CD8-positive, alpha-beta T cell (primary cell): ENCODE measurements at regions of chr9 and their contacts with region 1.

Region 1: DNA sequence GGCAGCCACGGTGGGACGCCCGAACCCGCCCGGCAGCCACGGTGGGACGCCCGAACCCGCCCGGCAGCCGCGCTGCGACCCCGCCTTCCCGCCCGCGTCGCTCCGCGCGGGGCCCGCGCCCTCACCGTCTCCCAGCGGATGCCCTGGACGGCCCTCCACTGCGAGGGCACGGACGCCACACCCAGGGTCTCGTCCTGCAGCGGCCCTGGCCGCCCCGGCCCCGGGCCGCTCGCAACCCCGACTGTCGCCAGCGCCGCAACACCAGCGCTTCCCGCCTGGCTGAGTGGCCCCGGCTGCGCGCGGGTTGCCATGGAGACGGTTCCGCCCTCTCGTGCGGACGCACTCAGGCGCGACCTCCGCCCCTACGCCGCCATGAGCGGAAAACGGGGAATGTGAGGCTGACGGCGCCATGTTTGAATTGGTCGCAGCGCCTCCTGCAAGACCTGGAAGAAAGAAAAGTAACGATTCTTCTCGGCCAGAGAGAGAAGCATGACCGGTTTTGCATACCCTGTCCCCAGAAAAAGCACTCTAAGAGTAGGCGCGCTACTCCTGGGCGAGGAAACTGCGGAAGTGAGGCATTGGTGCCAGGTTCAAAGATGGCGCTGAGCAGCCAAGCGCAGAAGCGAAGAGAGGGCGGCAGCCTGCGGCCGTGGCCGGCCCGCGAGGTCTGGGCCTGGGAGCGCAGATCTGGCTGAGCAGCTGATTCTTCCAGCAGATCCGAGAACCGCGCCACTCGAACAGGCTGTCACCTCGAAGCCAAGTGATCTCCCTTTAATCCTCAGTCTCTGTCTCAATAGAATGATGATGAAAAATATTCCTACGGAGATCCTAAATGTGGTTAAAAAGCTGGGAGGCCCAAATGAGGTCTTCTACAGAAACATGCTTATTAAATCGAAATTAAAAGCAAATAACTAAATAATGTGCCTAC is at the start of gene DYNC2I2:
- DNase-seq: peak; percentile 92 to 98 (median 97)
- ATAC-seq: peak; percentile 96
- H3K4me3 ChIP-seq: peak within 1 kb of the TSS; percentile 72 to 76
- H3K4me3 Mint-ChIP-seq: peak within 1 kb of the TSS; percentile 95
- H3K27ac ChIP-seq: peak within 1 kb of the TSS; percentile 88 to 97
- H3K27ac Mint-ChIP-seq: peak within 1 kb of the TSS; percentile 99
- H3K4me1 ChIP-seq: peaks cover 5% of the 10 kb centered on the region
- H3K4me1 Mint-ChIP-seq: peaks cover 7% of the 10 kb centered on the region
- H3K27me3 ChIP-seq: no peaks in the 10 kb centered on the region
- H3K27me3 Mint-ChIP-seq: no peaks in the 10 kb centered on the region
- CTCF ChIP-seq: no peak
- total RNA-seq, gene DYNC2I2: 3.7 to 3.9 TPM

Region 2: GRCh38 chr9:128575469-128575868 is 81.2 kb before region 1 on chr9:
- CTCF ChIA-PET with region 1: no interaction called
- POLR2A ChIA-PET with region 1: no interaction called
- intact Hi-C with region 1: no loop called
- DNase-seq: no peak
- ATAC-seq: no peak
- H3K4me3 ChIP-seq: no peak overlapping the region
- H3K4me3 Mint-ChIP-seq: no peak overlapping the region
- H3K27ac ChIP-seq: no peak overlapping the region
- H3K27ac Mint-ChIP-seq: no peak overlapping the region
- H3K4me1 ChIP-seq: peaks cover 8% of the 10 kb centered on the region
- H3K4me1 Mint-ChIP-seq: peaks cover 13% of the 10 kb centered on the region
- H3K27me3 ChIP-seq: no peaks in the 10 kb centered on the region
- H3K27me3 Mint-ChIP-seq: no peaks in the 10 kb centered on the region
- CTCF ChIP-seq: no peak

Region 3: GRCh38 chr9:128688512-128689292 is 32.0 kb after region 1 on chr9 and contains the start of gene SET:
- CTCF ChIA-PET with region 1: interaction called, 3 read pairs
- POLR2A ChIA-PET with region 1: interaction called, 4 read pairs
- intact Hi-C with region 1: loop called (anchors 1 kb)
- DNase-seq: peak; percentile 81 to 97 (median 92)
- ATAC-seq: peak; percentile 78
- H3K4me3 ChIP-seq: peak within 1 kb of the TSS; percentile 68 to 90
- H3K4me3 Mint-ChIP-seq: peak within 1 kb of the TSS; percentile 90
- H3K27ac ChIP-seq: peak within 1 kb of the TSS; percentile 68 to 91
- H3K27ac Mint-ChIP-seq: peak within 1 kb of the TSS; percentile 96
- H3K4me1 ChIP-seq: peaks cover 64% of the 10 kb centered on the region
- H3K4me1 Mint-ChIP-seq: peaks cover 67% of the 10 kb centered on the region
- H3K27me3 ChIP-seq: no peaks in the 10 kb centered on the region
- H3K27me3 Mint-ChIP-seq: no peaks in the 10 kb centered on the region
- CTCF ChIP-seq: no peak
- total RNA-seq, gene SET: 243 to 260 TPM

Region 4: DNA sequence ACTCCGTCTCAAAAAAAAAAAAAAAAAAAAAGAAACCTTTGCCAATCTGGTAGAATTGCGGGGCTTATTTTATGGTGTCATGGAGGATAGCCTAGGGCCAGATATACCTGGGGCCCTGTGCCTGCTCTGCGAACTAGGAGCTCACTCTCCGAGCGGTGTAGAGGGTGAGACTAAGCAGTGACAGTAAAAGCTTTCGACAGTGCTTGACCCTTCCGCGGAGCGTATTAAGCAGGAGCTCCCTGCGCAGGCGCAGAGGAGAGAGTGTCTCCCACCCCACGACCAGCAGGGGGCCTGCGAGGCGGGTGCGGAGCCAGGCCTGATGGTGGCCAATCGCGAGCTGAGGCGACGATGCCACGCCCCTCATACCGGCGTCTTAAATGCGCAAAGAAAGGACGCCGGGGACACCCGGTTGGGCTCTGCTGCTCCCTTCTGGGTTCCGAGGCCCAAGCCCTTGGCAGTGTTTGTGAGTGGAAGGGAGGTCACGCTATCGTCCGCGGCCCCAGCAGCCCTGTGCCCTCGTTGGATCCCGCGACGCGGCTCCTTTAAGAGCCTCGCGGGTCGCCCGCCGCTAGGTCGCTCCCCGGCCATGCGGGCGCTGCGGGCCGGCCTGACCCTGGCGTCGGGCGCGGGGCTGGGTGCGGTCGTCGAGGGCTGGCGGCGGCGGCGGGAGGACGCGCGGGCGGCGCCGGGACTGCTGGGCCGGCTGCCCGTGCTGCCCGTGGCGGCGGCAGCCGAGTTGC is 161.6 kb after region 1 on chr9 and contains the start of gene ENDOG:
- CTCF ChIA-PET with region 1: no interaction called
- POLR2A ChIA-PET with region 1: interaction called, 3 read pairs
- intact Hi-C with region 1: loop called in 1 of 2 experiments (anchors 1 kb)
- DNase-seq: peak; percentile 94 to 98 (median 97)
- ATAC-seq: peak; percentile 96
- H3K4me3 ChIP-seq: peak within 1 kb of the TSS; percentile 59 to 75
- H3K4me3 Mint-ChIP-seq: peak within 1 kb of the TSS; percentile 91
- H3K27ac ChIP-seq: peak within 1 kb of the TSS; percentile 52 to 67
- H3K27ac Mint-ChIP-seq: peak within 1 kb of the TSS; percentile 87
- H3K4me1 ChIP-seq: peaks cover 12% of the 10 kb centered on the region
- H3K4me1 Mint-ChIP-seq: peaks cover 21% of the 10 kb centered on the region
- H3K27me3 ChIP-seq: no peaks in the 10 kb centered on the region
- H3K27me3 Mint-ChIP-seq: no peaks in the 10 kb centered on the region
- CTCF ChIP-seq: peak; percentile 98
- total RNA-seq, gene ENDOG: 6.2 to 6.4 TPM

Region 5: GRCh38 chr9:128829477-128830251 is 173.0 kb after region 1 on chr9 and contains the start of gene SPOUT1:
- CTCF ChIA-PET with region 1: no interaction called
- POLR2A ChIA-PET with region 1: no interaction called
- intact Hi-C with region 1: loop called in 1 of 2 experiments (anchors 1 kb)
- DNase-seq: peak; percentile 88 to 96 (median 92)
- ATAC-seq: peak; percentile 99
- H3K4me3 ChIP-seq: peak within 1 kb of the TSS; percentile 89 to 99
- H3K4me3 Mint-ChIP-seq: peak within 1 kb of the TSS; percentile 96
- H3K27ac ChIP-seq: peak within 1 kb of the TSS; percentile 73 to 83
- H3K27ac Mint-ChIP-seq: peak within 1 kb of the TSS; percentile 94
- H3K4me1 ChIP-seq: peaks cover 18% of the 10 kb centered on the region
- H3K4me1 Mint-ChIP-seq: peaks cover 20% of the 10 kb centered on the region
- H3K27me3 ChIP-seq: no peaks in the 10 kb centered on the region
- H3K27me3 Mint-ChIP-seq: no peaks in the 10 kb centered on the region
- CTCF ChIP-seq: no peak
- total RNA-seq, gene SPOUT1: 25.0 to 25.2 TPM